ENCODE measurements at regions of chr9 and their contacts with region 1.

Region 1: DNA sequence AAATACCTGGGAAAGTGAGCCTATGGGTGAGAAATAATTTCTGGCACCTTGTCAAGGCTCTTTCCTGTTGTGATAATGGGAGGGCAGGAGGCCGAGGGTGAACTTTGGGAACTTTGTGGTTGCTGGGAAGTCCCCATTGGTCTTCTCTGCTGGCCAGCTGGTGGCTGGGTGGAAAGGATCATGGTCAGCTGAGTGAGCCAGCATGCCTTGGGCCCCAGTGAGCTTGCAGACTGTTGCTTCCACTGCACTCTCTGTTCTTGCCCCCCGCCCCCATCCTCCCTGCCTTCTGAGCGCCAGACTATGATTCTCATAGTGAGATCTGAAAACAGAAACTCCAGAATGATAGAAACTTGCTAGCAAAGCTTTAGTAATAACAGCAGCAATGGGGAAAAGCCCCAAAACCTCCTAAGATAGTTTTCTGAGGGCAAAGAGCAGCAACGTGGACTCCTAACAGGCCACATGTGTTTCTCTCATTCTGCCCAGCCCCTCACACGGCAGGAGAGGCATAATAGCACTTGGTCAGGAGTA is 139.2 kb upstream of the SMARCA2 start:
- DNase-seq: peak; percentile 20
- H3K4me3 Mint-ChIP-seq: no peak overlapping the region
- H3K27ac Mint-ChIP-seq: peak overlapping the region; percentile 83
- H3K4me1 Mint-ChIP-seq: peaks cover 28% of the 10 kb centered on the region
- H3K27me3 Mint-ChIP-seq: peaks cover 22% of the 10 kb centered on the region

Region 2: DNA sequence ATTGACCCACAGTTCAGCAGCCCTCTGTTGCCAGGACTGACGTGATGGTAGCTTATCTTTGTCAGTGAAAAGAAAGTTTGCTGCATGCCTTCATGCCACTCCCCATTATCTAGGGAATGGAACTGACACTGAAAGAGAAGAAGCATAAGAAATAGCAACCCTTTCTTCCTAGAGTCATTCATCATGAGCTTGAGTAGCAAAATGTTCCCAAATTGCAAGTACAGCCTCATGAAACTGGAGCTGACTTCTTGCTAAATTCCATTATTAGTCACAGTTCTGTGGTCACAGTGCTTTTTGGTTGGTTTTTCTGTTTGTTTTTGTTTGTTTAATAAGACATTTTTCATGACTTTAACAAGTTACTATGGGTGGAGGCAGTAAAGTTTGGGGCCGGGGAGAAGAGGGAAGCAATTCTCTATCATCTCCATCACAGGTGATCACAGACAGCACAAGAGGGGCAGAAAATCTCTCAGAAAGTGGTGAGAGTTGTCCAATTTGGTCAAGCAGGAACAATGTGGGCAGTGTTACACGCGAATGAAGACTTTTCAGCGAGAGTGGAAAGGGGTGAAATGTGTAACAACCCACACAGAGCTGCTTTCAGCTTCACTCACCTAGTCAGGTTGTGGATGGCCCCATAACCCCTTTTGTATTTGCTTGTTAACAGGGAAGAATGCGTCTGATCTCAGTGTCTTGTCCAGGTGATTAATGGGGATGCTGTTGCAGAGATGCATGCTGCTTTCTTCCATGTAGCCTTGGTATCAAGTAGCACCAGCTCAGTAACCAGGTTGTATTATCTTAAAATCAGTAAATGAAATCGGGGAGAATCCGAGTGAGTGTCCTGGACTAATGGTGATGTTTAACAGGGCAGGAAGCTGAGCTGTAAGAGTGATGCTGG is 385.4 kb before region 1 on chr9:
- intact Hi-C with region 1: loop called (anchors 1 kb)
- DNase-seq: no peak
- H3K4me3 Mint-ChIP-seq: no peak overlapping the region
- H3K27ac Mint-ChIP-seq: peak overlapping the region; percentile 82
- H3K4me1 Mint-ChIP-seq: peaks cover 9% of the 10 kb centered on the region
- H3K27me3 Mint-ChIP-seq: no peaks in the 10 kb centered on the region

Region 3: GRCh38 chr9:1804128-1804865 is 71.7 kb before region 1 on chr9:
- intact Hi-C with region 1: loop called (anchors 1 kb)
- DNase-seq: no peak
- H3K4me3 Mint-ChIP-seq: no peak overlapping the region
- H3K27ac Mint-ChIP-seq: no peak overlapping the region
- H3K4me1 Mint-ChIP-seq: no peaks in the 10 kb centered on the region
- H3K27me3 Mint-ChIP-seq: no peaks in the 10 kb centered on the region

Region 4: DNA sequence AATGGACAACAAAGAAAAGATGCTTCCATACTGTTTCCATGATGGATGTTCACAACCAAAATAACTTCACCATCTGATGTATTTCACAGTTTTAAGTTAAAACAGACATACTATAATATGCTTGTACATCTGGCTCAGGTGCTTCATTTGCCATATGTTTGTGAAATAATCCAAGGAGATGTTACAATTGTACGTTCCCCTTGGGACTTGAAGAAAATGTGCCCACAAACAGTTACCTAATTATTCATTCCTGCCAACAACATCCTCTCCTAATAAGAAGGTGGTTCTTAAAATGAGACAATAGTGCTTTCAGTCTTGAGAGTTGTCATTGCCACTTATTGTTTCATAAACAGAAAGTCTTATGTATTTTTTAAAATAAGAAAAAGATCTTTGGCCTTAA is 106.1 kb after region 1 on chr9:
- intact Hi-C with region 1: no loop called
- DNase-seq: no peak
- H3K4me3 Mint-ChIP-seq: no peak overlapping the region
- H3K27ac Mint-ChIP-seq: no peak overlapping the region
- H3K4me1 Mint-ChIP-seq: no peaks in the 10 kb centered on the region
- H3K27me3 Mint-ChIP-seq: peaks cover 12% of the 10 kb centered on the region

Region 5: GRCh38 chr9:2053883-2054845 is 178.2 kb after region 1 on chr9:
- intact Hi-C with region 1: loop called (anchors 1 kb)
- DNase-seq: peak; percentile 68
- H3K4me3 Mint-ChIP-seq: peak overlapping the region; percentile 24
- H3K27ac Mint-ChIP-seq: peak overlapping the region; percentile 56
- H3K4me1 Mint-ChIP-seq: peaks cover 48% of the 10 kb centered on the region
- H3K27me3 Mint-ChIP-seq: no peaks in the 10 kb centered on the region

Region 6: DNA sequence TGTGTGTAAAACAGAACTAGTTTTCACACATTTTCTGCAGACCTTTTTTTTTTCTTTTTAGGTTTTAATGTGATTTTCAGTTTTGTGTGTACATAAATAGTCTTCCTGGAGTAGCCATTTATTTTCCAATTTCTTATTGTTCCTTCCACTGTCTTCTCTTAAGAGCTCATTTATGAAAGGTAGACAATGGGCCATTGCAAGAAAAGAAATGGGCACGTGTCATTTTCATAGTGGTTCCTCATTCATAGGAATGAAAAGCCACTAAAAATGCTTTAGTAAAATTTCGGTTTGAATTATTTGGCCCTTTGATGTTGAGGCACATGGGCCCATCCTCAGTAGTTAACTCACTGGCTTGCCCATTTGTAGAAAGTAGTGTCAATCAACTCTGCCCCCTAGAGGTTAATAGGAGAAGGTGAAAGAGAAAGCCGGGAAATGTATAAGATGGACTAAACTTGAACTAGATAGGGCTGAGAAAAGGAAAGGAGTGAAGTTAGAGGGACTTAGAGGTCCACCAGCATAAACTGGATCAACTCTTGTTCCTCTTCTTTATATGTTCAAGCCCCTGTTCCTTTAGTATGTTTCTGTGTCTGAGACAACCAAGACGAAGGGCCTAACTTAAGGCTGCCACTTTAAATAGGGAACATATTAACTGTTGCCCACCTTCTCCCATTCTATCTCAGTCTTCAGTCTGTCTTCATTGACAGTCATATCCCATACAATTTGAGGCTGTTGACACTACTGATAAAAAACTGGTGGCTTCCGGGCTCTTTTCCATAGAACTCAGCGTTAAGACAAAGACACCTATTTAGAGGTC is 211.7 kb after region 1 on chr9:
- intact Hi-C with region 1: loop called (anchors 1 kb)
- DNase-seq: no peak
- H3K4me3 Mint-ChIP-seq: no peak overlapping the region
- H3K27ac Mint-ChIP-seq: no peak overlapping the region
- H3K4me1 Mint-ChIP-seq: peaks cover 19% of the 10 kb centered on the region
- H3K27me3 Mint-ChIP-seq: no peaks in the 10 kb centered on the region

Region 7: DNA sequence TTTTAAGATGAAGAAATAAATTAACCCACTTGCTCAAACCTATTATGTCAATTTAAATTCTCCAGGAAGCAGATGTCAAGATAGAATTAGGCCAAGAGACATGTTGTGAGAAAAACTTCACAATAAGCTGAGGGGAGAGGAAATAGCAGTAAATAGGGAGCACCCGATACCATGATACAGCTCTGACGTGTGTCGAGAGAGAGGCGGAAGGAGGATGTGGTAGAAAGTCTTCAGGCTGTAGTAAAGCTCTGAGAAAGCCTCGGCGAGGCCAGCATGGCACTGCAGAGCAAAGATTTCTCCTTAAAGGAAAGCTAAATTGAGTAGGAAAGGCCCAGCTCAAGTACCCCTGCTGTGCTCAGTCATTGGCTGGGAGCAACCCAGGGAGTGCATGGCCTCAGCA is 974.0 kb after region 1 on chr9:
- intact Hi-C with region 1: loop called (anchors 2 kb)
- DNase-seq: no peak
- H3K4me3 Mint-ChIP-seq: no peak overlapping the region
- H3K27ac Mint-ChIP-seq: no peak overlapping the region
- H3K4me1 Mint-ChIP-seq: peaks cover 7% of the 10 kb centered on the region
- H3K27me3 Mint-ChIP-seq: peaks cover under 1% of the 10 kb centered on the region

Measured in activated T-helper 1 cell treated with anti-CD3 and anti-CD28 coated beads, Interleukin-12 subunit alpha, Interleukin-12 subunit beta, Interleukin-2, Interleukin-4 antibody, amounts not matched to agents 30 ng/mL and 10 ng/mL and 1 ng/mL, durations not matched to agents 14 hours and 24 hours and 36 hours (primary cell).